PC-9 (cell line): ENCODE measurements at regions of chr19 and their contacts with region 1.

Region 1: GRCh38 chr19:18831524-18832305 is at the start of gene UPF1:
- DNase-seq: peak; percentile 80 to 91
- H3K4me3 ChIP-seq: peak within 1 kb of the TSS; percentile 95
- H3K27ac ChIP-seq: peak within 1 kb of the TSS; percentile 7; the same call in 1 of the 2 replicates
- H3K4me1 ChIP-seq: peaks cover 22% of the 10 kb centered on the region
- H3K27me3 ChIP-seq: no peaks in the 10 kb centered on the region
- CTCF ChIP-seq: no peak
- total RNA-seq, gene UPF1: 78.8 and 93.0 TPM in 2 replicates

Region 2: DNA sequence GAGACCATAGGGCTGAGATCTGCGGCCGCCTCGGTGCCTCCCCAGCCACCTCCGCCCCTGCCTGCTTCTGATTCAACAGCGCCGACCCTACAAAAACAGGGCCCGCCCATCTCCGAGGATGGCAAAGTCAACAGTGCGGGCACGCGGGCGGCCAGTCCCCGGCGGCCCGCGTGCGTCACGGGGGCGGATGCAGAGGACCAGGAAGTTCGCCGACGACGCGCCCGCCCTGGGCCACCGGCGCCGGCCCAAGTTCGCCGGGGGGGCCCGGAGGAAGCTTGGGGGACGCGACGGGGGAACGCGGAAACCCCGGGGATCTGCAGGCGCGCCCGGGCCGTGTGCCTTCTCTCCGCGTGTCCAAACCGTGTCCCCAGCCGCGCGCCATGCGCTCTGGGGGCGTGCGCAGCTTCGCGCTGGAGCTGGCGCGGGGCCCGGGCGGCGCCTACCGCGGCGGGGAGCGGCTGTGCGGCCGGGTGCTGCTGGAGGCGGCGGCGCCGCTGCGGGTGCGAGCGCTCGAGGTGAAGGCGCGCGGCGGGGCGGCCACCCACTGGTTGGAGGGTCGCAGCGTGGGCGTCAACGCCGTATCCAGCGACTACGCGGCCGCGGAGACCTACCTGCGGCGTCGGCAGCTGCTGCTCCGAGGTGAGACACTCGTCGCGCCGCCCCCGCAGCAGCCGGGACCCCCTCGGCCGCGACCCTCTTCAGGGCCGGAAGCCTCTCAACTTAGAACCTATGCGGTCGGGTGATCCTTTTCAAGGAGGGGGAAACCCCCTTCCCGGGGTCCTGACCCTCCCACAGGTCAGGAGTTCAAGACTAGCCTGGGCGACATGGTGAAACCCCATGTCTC is 830.6 kb before region 1 on chr19:
- CTCF ChIA-PET with region 1: interaction called, 10 read pairs
- POLR2A ChIA-PET with region 1: no interaction called
- intact Hi-C with region 1: no loop called
- DNase-seq: peak; percentile 85 to 88
- H3K4me3 ChIP-seq: peak overlapping the region; percentile 99
- H3K27ac ChIP-seq: peak overlapping the region; percentile 75
- H3K4me1 ChIP-seq: peaks cover 38% of the 10 kb centered on the region
- H3K27me3 ChIP-seq: no peaks in the 10 kb centered on the region
- CTCF ChIP-seq: no peak

Region 3: DNA sequence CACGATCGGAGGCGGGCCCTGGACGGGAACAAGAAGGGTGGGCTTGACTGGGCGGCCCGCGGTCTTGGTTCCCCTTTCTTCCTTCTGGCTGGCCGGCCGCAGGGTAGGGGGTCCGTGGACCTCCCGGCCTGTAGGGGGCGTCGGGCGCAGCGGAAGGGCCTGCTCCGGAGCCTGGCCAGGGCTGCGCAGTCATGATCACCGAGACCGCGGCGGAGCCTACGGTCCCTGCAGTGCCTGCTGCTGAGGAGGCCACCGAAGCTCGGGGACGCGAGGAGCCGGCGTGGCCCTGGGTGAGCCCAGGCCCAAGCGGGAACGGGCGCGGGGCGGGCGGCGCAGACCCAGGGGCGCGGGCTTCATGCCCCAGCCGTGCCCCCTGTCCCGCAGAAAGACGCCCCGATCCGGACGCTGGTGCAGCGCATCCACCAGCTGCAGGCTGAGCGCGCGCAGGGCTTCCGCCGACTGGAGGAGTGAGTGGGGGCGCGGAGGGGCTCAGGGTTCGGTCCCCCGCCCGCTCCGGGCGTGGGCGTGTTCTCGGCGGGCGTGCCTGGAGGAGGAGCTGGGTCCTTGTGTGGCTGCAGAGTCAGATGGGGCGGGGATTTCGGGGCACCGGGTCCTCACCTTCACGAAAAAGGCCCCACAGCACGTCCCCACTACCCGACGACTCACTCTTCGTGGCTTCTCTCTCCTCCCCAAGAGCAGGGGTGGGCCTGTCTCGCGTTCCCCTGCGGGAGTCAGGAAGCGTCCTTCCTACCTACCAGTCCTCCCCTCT is 242.9 kb before region 1 on chr19 and contains the start of gene REX1BD:
- CTCF ChIA-PET with region 1: interaction called, 3 read pairs
- POLR2A ChIA-PET with region 1: interaction called, 3 read pairs
- intact Hi-C with region 1: loop called (anchors 5 kb)
- DNase-seq: peak; percentile 66 to 81
- H3K4me3 ChIP-seq: peak within 1 kb of the TSS; percentile 79
- H3K27ac ChIP-seq: peak within 1 kb of the TSS; percentile 64
- H3K4me1 ChIP-seq: peaks cover 11% of the 10 kb centered on the region
- H3K27me3 ChIP-seq: no peaks in the 10 kb centered on the region
- CTCF ChIP-seq: peak; percentile 92
- total RNA-seq, gene REX1BD: 44.8 and 64.3 TPM in 2 replicates